ENCODE measurements at regions of chr15 and their contacts with region 1.

Region 1: DNA sequence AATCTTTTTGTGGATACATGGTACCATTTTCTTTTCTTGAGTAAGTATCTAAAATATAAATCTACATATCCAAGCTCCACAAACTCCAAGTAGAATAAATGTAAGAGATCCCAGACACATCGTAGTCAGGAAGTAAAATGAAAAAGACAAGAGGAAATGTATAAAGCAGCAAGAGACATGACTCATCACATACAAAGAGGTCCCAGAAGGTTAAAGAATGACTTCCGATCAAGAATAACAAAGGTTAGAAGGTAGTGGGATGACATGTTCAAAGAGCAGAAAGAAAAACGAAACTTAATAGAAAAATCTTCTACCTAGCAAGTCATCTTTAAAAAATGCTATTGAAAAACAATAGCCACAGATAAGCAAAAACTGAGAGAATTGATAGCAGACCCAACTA is 705.8 kb downstream of the NR2F2 start:
- DNase-seq: no peak
- ATAC-seq: no peak
- H3K4me3 ChIP-seq: no peak overlapping the region
- H3K27ac ChIP-seq: no peak overlapping the region
- H3K4me1 ChIP-seq: no peaks in the 10 kb centered on the region
- H3K27me3 ChIP-seq: no peaks in the 10 kb centered on the region
- CTCF ChIP-seq: no peak
- POLR2A ChIP-seq: no peak
- RAD21 ChIP-seq: no peak

Region 2: GRCh38 chr15:96851613-96852012 is 184.7 kb before region 1 on chr15:
- CTCF ChIA-PET with region 1: no interaction called
- POLR2A ChIA-PET with region 1: no interaction called
- RAD21 ChIA-PET with region 1: no interaction called
- intact Hi-C with region 1: no loop called
- DNase-seq: no peak
- ATAC-seq: no peak
- H3K4me3 ChIP-seq: no peak overlapping the region
- H3K27ac ChIP-seq: no peak overlapping the region
- H3K4me1 ChIP-seq: no peaks in the 10 kb centered on the region
- H3K27me3 ChIP-seq: no peaks in the 10 kb centered on the region
- CTCF ChIP-seq: no peak
- POLR2A ChIP-seq: no peak
- RAD21 ChIP-seq: no peak

Region 3: DNA sequence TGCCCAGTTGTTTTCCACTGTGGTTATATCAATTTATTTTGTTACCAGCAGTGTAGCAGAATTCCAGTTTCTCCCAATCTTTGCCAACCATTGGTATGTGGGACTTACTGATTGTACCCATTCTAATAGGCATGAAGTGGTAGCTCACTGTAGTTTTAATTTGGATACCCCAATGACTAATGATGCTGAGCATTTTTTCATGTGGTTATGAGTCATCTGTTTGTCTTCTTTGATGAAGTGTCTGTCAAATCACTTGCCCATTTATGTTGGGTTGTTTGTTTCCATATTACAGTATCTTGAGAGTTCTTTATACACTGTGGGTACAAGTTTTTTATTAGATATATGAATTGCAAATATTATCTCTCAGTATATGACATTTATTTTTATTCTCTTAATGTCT is 61.5 kb before region 1 on chr15:
- CTCF ChIA-PET with region 1: no interaction called
- POLR2A ChIA-PET with region 1: no interaction called
- RAD21 ChIA-PET with region 1: no interaction called
- intact Hi-C with region 1: no loop called
- DNase-seq: no peak
- ATAC-seq: no peak
- H3K4me3 ChIP-seq: no peak overlapping the region
- H3K27ac ChIP-seq: no peak overlapping the region
- H3K4me1 ChIP-seq: no peaks in the 10 kb centered on the region
- H3K27me3 ChIP-seq: no peaks in the 10 kb centered on the region
- CTCF ChIP-seq: no peak
- POLR2A ChIP-seq: no peak
- RAD21 ChIP-seq: no peak

Region 4: DNA sequence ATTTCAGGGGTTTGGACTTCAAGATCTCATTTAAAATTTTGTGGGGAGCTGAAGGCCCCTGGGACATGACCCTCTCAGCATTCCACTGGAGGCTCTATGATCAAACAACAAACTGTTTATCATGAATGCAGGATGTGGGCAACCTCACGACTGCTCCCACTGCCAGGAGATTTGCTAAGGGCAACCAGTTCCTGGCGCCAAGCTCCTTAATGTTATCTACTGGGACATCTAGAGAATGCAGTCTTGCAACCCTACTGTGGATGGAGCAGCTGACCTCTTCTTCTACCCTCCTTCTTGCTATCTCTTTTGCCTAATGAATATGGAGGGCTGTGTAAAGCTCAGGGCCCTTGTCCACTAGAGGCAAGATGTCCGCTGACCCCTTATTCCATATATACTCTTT is 69.2 kb after region 1 on chr15:
- CTCF ChIA-PET with region 1: no interaction called
- POLR2A ChIA-PET with region 1: no interaction called
- RAD21 ChIA-PET with region 1: no interaction called
- intact Hi-C with region 1: loop called (anchors 10 kb)
- DNase-seq: no peak
- ATAC-seq: no peak
- H3K4me3 ChIP-seq: no peak overlapping the region
- H3K27ac ChIP-seq: no peak overlapping the region
- H3K4me1 ChIP-seq: no peaks in the 10 kb centered on the region
- H3K27me3 ChIP-seq: no peaks in the 10 kb centered on the region
- CTCF ChIP-seq: no peak
- POLR2A ChIP-seq: no peak
- RAD21 ChIP-seq: no peak